K562 (cell line): ENCODE measurements at regions of chr2 and their contacts with region 1.

Region 1: DNA sequence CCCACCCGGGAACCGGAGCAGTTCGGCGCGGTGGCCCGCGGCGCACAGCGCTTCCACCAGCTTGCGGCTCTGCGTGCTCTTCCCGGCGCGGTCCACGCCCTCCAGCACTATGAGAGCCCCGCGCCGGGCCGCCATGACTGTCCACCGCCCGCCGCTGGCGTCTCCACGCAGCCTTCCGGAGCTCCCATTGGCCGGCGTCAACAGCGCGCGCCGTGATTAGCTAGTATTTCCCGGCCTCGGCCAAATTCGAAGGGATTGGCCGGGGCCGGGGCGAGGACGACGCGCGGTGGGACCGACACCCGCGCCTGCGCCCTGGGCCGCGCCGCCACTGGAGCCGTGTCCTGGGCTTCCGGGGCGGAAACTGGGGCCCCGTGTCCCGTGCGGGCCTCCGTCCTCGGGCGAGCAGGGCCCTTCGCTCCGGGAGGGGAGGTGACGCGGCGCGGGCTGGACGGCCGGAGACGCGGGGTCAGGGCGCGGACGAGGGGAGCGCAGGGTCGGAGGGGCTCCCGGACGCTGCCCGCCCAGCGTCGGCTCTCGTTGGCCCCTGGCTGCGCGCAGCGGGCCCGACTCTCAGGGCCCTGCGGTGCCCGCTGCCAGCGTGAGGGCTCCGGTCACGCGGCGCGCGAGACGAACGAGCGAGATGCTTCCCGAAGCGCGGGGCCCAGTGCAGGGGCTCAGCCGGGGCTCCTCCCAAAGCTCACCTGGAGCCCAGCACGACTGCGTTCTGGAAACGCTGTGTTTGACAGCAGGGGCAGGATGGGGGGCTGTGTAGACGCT is at the start of gene DTYMK:
- DNase-seq: peak; percentile 85 to 95 (median 90)
- ATAC-seq: peak; percentile 94
- H3K4me3 ChIP-seq: peak within 1 kb of the TSS; percentile 97
- H3K27ac ChIP-seq: peak within 1 kb of the TSS; percentile 95
- H3K4me1 ChIP-seq: peaks cover 4 to 11% of the 10 kb centered on the region in 2 experiments; a peak in 4 of 5 replicates
- H3K27me3 ChIP-seq: no peaks in the 10 kb centered on the region
- CTCF ChIP-seq: no peak
- EP300 ChIP-seq: no peak
- POLR2A ChIP-seq: peak; percentile 73
- RAD21 ChIP-seq: no peak
- polyA plus RNA-seq, gene DTYMK: 8.2 to 20.4 TPM

Region 2: DNA sequence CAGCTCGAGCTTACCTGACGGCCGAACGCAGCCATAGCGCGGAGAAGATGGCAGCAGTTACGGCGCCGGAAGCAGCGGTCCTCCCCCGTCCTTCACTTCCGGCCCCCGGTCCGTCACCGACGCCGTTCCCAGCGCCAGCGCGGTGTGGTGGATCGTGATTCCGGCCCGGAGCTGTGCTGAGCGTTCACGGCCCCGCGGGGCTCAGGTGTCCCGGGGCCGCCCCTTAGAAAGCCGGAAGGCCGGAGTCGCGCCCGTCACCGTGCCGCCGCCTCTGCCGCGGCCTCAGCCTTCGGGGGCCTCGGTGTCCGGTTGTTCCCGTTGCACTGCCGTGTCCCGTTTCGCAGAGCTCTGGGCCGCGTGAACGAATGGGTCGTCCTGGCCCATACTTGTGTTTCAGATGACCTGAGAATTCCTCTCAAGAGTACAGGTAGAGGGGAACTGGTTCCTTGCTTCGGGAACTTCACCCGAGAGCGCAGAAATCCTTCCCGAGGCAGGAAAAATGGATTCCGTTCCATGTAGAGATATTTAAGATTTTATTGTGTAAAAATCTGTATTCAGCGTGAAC is 584.5 kb before region 1 on chr2 and contains the start of gene MTERF4:
- CTCF ChIA-PET with region 1: no interaction called
- POLR2A ChIA-PET with region 1: no interaction called
- in situ Hi-C with region 1: no loop called
- intact Hi-C with region 1: no loop called
- DNase-seq: peak; percentile 83 to 87 (median 84)
- ATAC-seq: peak; percentile 99
- H3K4me3 ChIP-seq: peak within 1 kb of the TSS; percentile 88
- H3K27ac ChIP-seq: peak within 1 kb of the TSS; percentile 87
- H3K4me1 ChIP-seq: peaks cover 0 to 8% of the 10 kb centered on the region in 2 experiments; a peak in 2 of 5 replicates
- H3K27me3 ChIP-seq: no peaks in the 10 kb centered on the region
- CTCF ChIP-seq: no peak
- EP300 ChIP-seq: no peak; the same call in 1 of the 2 replicates
- POLR2A ChIP-seq: peak; percentile 80
- RAD21 ChIP-seq: no peak
- polyA plus RNA-seq, gene MTERF4: 15.8 to 20.9 TPM

Region 3: GRCh38 chr2:241702132-241703031 is 15.5 kb after region 1 on chr2:
- CTCF ChIA-PET with region 1: no interaction called
- POLR2A ChIA-PET with region 1: interaction called, 16 read pairs
- in situ Hi-C with region 1: no loop called
- intact Hi-C with region 1: no loop called
- DNase-seq: peak; percentile 83 to 89 (median 86)
- ATAC-seq: peak; percentile 90
- H3K4me3 ChIP-seq: peak overlapping the region; percentile 89
- H3K27ac ChIP-seq: peak overlapping the region; percentile 94
- H3K4me1 ChIP-seq: peaks cover 3 to 21% of the 10 kb centered on the region in 2 experiments; a peak in 3 of 5 replicates
- H3K27me3 ChIP-seq: no peaks in the 10 kb centered on the region
- CTCF ChIP-seq: peak; percentile 57 to 79 (median 64)
- EP300 ChIP-seq: no peak
- POLR2A ChIP-seq: no peak; the same call in 1 of the 2 replicates
- RAD21 ChIP-seq: no peak

Region 4: GRCh38 chr2:241734467-241735208 is 47.8 kb after region 1 on chr2 and contains the start of gene D2HGDH:
- CTCF ChIA-PET with region 1: no interaction called
- POLR2A ChIA-PET with region 1: no interaction called
- in situ Hi-C with region 1: no loop called
- intact Hi-C with region 1: loop called (anchors 5 kb)
- DNase-seq: peak; percentile 83 to 92 (median 90)
- ATAC-seq: peak; percentile 93
- H3K4me3 ChIP-seq: peak within 1 kb of the TSS; percentile 74
- H3K27ac ChIP-seq: peak within 1 kb of the TSS; percentile 88
- H3K4me1 ChIP-seq: peaks cover 4 to 48% of the 10 kb centered on the region in 2 experiments; a peak in 3 of 5 replicates
- H3K27me3 ChIP-seq: no peaks in the 10 kb centered on the region
- CTCF ChIP-seq: no peak
- EP300 ChIP-seq: no peak
- POLR2A ChIP-seq: peak; percentile 60
- RAD21 ChIP-seq: no peak
- polyA plus RNA-seq, gene D2HGDH: 0.39 to 0.52 TPM

Region 5: DNA sequence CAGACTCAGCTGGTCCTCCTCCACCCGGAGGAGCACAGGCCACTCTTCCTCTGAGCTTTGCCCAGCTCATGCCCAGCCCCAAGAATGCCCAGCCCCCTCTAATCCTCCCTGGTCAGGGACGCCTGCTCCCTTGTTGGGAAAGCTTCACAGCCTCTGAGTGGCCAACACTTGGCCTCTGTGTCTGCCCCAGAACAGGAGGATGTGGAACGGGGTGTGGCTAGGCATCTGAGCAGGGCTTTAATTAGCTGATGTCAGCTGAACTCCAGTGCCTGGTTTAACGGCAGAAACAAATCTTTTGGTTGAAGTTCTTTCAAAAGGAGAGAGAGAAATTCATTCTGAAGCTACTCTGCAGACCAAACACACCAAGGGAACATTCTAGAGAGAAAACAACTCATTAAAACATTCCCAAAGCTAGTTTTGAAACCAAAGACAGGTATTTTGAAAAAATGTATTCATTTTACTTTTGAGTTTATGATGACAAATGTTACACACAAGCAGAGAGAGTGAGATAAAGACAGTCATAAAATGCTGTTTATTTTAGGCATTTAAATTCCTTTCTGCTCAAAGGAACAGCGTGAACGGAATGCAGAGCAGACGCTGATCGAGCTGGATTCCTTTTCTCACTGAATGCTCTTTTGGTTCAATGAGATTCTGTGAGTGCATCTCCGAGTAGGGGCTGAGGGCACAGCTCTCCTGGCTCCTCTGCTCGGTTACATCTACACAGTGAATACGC is 246.5 kb after region 1 on chr2:
- CTCF ChIA-PET with region 1: no interaction called
- POLR2A ChIA-PET with region 1: no interaction called
- in situ Hi-C with region 1: no loop called
- intact Hi-C with region 1: no loop called
- DNase-seq: no peak
- ATAC-seq: no peak
- H3K4me3 ChIP-seq: no peak overlapping the region
- H3K27ac ChIP-seq: no peak overlapping the region
- H3K4me1 ChIP-seq: peaks cover 0 to 7% of the 10 kb centered on the region in 2 experiments; a peak in 2 of 5 replicates
- H3K27me3 ChIP-seq: no peaks in the 10 kb centered on the region
- CTCF ChIP-seq: no peak
- EP300 ChIP-seq: no peak
- POLR2A ChIP-seq: no peak
- RAD21 ChIP-seq: no peak